Right ventricle myocardium inferior (tissue), 1 donor: ENCODE measurements at regions of chr1 and their contacts with region 1.

Region 1: DNA sequence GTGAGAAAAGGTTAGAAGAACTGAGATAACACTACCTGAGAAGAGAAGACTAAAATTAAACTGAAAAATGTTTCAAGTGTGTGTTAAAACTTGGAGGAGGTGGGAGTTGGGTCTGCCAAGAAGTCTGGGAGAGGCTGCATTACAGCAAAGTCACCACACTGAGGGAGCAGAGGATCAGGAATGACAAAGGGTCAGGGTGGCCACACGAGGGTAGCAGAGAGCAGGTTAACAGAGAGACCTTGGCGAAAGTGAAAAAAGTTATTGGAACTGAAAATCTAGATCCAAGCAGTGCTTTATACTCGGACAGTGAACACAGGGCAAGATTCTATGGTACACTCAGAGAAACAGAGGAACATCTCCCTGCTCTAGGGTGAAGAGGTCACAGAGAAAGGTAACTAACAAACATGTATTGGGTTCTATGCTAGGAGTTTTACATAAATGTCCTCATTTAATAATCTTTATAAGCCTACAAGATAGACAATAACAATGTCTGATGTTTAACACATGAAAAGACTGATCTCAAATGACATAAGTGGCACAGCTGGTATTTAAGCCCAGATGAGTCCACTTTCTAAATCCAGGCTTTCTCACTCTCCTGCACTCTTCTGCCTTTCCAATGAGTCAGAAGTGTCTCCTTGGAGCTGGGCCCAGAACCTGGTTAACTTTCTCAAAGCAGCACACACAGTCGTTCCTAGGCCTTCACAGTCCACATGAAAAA is 10.3 kb upstream of the CADM3 start:
- DNase-seq: peak; percentile 69
- ATAC-seq: peak; percentile 99

Region 2: DNA sequence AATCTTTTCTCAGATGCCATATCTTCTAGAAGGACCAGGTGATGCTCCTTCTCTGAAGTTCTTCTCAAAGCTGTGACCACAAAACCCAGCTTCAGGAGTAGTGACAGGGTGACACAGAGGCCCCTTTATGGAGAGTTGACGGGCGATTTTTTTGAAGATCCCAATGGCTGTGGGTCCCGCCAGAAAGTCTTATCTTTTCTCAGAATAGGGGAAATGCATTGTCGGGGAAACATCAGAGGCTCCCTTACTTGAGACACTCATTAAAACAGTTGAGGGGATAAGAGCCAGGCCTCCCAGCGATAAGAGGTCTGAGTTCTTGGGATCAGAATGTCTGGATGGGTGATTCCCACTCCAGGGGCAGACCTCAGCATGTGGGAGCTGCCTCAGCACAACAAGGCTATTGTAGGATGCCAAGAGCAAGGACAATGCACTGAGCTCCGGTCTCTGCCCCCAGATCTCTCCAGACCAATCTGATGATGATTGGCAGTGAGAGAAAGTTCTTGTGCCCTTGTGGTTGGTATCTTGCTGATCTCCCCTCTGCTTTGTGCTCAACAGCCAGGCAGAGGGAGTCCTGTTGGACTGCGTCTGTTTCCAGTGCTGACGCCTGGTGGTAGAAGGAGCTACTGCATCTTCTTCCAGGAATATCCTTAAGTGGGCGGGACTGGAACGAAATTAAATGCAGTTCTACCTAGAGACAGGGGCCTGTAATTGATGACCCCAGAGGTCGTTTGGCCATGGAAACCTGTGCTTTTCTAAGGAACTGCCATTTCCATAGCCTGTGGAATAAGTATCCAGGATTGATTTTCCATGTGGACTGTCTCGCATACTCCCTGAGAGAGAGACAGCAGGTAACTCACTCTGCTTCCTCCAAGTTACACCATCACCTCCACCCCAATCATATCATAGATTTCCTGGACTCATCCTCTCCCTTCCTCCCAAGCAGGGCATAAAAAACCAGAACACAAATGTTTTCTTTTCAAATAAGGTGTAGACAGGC is 36.7 kb after region 1 on chr1:
- intact Hi-C with region 1: loop called (anchors 5 kb)
- DNase-seq: no peak
- ATAC-seq: peak; percentile 64

Region 3: GRCh38 chr1:159214149-159214760 is 53.1 kb after region 1 on chr1:
- intact Hi-C with region 1: loop called (anchors 2 kb)
- DNase-seq: no peak
- ATAC-seq: no peak